ENCODE measurements at regions of chr6 and their contacts with region 1.

Region 1: DNA sequence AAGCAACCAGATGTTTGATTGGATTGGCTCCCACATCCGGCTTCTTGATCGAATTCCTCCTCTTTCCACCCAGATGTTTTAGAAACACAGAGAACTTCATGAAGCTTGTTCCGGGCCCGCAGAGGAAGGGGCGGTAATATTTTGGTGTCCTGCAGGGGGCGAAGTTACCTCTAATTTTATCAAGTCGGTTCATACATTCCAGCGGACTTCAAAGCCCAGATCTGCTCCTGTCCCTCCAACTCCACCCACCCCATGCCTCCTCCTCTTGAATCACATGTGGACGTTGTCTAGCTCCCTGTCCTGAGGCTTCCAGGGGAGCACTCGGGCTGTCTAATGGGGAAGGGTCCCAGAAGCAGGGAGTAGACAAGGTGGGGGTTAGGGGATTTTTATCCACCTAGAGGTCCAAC is 2.9 kb upstream of the BMP6 start:
- DNase-seq: peak; percentile 80 to 87 (median 83)
- H3K4me3 ChIP-seq: no peak overlapping the region
- H3K27ac ChIP-seq: no peak overlapping the region
- H3K4me1 ChIP-seq: peaks cover 0 to 31% (median 29%) of the 10 kb centered on the region in 4 experiments
- H3K27me3 ChIP-seq: peaks cover 8 to 45% (median 17%) of the 10 kb centered on the region in 5 experiments

Region 2: DNA sequence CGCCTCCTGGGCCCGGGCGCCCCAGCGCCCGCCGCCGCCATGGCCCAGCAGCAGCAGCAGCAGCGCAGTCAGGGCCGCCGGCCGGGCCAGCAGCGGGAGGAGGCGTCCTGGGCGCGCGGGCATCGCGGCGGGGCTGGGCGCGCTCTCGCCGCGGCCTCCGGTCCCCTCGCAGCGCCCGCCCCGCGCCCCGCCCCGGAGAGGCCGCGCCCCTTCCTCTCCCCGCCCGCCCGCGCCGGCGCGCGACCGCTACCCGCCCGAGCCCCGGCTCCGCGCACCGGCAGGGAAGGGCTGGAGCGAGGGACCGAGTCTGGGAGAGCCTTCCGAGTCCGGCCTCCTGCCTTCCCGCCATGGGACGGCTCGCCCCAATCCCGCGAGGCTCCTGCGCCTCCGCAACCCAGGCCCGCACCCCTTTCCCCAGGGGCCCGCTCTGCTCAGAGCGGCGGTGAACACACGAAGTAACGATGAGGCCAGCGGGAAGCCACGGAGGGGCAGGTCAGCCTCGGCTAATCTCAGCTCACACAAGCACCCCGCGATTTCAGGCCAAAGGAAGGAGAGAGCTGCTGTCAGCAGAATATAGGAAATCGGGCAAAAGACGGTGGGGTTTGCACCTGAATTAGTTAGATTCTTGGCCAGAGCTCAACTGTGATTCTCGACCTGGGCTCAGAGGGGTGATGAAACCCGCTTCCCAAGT is 187.8 kb after region 1 on chr6 and contains the start of gene TXNDC5:
- CTCF ChIA-PET with region 1: interaction called, 11 read pairs
- POLR2A ChIA-PET with region 1: no interaction called
- DNase-seq: peak; percentile 51 to 72 (median 58)
- H3K4me3 ChIP-seq: peak within 1 kb of the TSS; percentile 54 to 86 (median 72)
- H3K27ac ChIP-seq: peak within 1 kb of the TSS in 1 of 2 experiments; percentile 49
- H3K4me1 ChIP-seq: peaks cover 3 to 39% (median 21%) of the 10 kb centered on the region in 4 experiments
- H3K27me3 ChIP-seq: peaks cover 0 to 6% (median 0%) of the 10 kb centered on the region in 5 experiments

Region 3: GRCh38 chr6:7992002-7992815 is 269.2 kb after region 1 on chr6:
- CTCF ChIA-PET with region 1: interaction called, 37 read pairs
- POLR2A ChIA-PET with region 1: interaction called, 8 read pairs
- DNase-seq: peak; percentile 50 to 69 (median 62)
- H3K4me3 ChIP-seq: no peak overlapping the region
- H3K27ac ChIP-seq: no peak overlapping the region
- H3K4me1 ChIP-seq: no peaks in the 10 kb centered on the region
- H3K27me3 ChIP-seq: no peaks in the 10 kb centered on the region

Region 4: DNA sequence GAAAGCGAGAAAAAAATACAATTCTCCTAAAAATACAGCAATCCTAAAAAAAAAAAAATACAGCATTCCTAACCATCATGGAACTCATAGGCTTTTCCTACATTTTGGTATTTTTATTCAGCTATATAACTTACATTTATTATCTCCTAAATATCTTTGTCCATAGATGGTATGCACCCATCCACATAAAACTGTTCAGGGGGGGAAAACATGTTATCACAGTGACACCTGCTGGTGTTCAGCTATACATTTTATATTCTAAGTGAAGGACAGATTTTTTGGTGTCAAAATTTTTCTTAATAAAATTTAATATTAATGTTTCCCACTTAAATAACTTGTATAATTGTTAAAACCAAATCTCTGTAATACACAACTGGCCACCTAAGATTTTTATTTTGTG is 283.2 kb after region 1 on chr6:
- CTCF ChIA-PET with region 1: interaction called, 26 read pairs
- POLR2A ChIA-PET with region 1: no interaction called
- DNase-seq: peak; percentile 54 to 71 (median 66)
- H3K4me3 ChIP-seq: no peak overlapping the region
- H3K27ac ChIP-seq: no peak overlapping the region
- H3K4me1 ChIP-seq: no peaks in the 10 kb centered on the region
- H3K27me3 ChIP-seq: no peaks in the 10 kb centered on the region

Region 5: GRCh38 chr6:8059129-8059528 is 336.1 kb after region 1 on chr6:
- CTCF ChIA-PET with region 1: interaction called, 50 read pairs
- POLR2A ChIA-PET with region 1: no interaction called
- DNase-seq: peak; percentile 36 to 64 (median 61)
- H3K4me3 ChIP-seq: no peak overlapping the region
- H3K27ac ChIP-seq: no peak overlapping the region
- H3K4me1 ChIP-seq: peaks cover 0 to 12% (median 6%) of the 10 kb centered on the region in 4 experiments
- H3K27me3 ChIP-seq: no peaks in the 10 kb centered on the region